ENCODE measurements at regions of chr10 and their contacts with region 1.

Region 1: GRCh38 chr10:31318854-31319601 is at the start of gene ZEB1:
- DNase-seq: peak; percentile 90
- H3K4me3 ChIP-seq: peak within 1 kb of the TSS; percentile 59 to 96 (median 82)
- H3K27ac ChIP-seq: peak within 1 kb of the TSS; percentile 92 to 97 (median 94)
- H3K4me1 ChIP-seq: peaks cover 0 to 34% (median 8%) of the 10 kb centered on the region in 4 donors
- H3K27me3 ChIP-seq: peaks cover 41% of the 10 kb centered on the region
- CTCF ChIP-seq: peak; percentile 40 to 56 (median 51)
- EP300 ChIP-seq: no peak
- POLR2A ChIP-seq: peak; percentile 30
- total RNA-seq, gene ZEB1: 22.4 to 61.1 (median 40.1) TPM

Region 2: GRCh38 chr10:31031558-31032257 is 287.3 kb before region 1 on chr10 and contains the start of gene ZNF438:
- in situ Hi-C with region 1: no loop called
- intact Hi-C with region 1: loop called (anchors 2 kb)
- DNase-seq: peak; percentile 97
- H3K4me3 ChIP-seq: peak within 1 kb of the TSS; percentile 48 to 73 (median 52)
- H3K27ac ChIP-seq: peak within 1 kb of the TSS; percentile 98 to 100 (median 99)
- H3K4me1 ChIP-seq: peaks cover 2 to 22% (median 8%) of the 10 kb centered on the region in 4 donors
- H3K27me3 ChIP-seq: no peaks in the 10 kb centered on the region
- CTCF ChIP-seq: peak; percentile 45 to 92 (median 62)
- EP300 ChIP-seq: peak; percentile 7
- POLR2A ChIP-seq: peak; percentile 80
- total RNA-seq, gene ZNF438: 4.4 to 7.4 (median 6.4) TPM

Region 3: GRCh38 chr10:31042670-31043069 is 276.4 kb before region 1 on chr10:
- in situ Hi-C with region 1: no loop called
- intact Hi-C with region 1: no loop called
- DNase-seq: no peak
- H3K4me3 ChIP-seq: no peak overlapping the region
- H3K27ac ChIP-seq: no peak overlapping the region
- H3K4me1 ChIP-seq: no peaks in the 10 kb centered on the region
- H3K27me3 ChIP-seq: no peaks in the 10 kb centered on the region
- CTCF ChIP-seq: no peak
- EP300 ChIP-seq: no peak
- POLR2A ChIP-seq: no peak

Region 4: GRCh38 chr10:31490858-31491504 is 172.0 kb after region 1 on chr10:
- in situ Hi-C with region 1: no loop called
- intact Hi-C with region 1: loop called (anchors 10 kb)
- DNase-seq: no peak
- H3K4me3 ChIP-seq: no peak overlapping the region
- H3K27ac ChIP-seq: no peak overlapping the region
- H3K4me1 ChIP-seq: no peaks in the 10 kb centered on the region
- H3K27me3 ChIP-seq: no peaks in the 10 kb centered on the region
- CTCF ChIP-seq: peak; percentile 41 to 52 (median 45)
- EP300 ChIP-seq: no peak
- POLR2A ChIP-seq: no peak

Region 5: DNA sequence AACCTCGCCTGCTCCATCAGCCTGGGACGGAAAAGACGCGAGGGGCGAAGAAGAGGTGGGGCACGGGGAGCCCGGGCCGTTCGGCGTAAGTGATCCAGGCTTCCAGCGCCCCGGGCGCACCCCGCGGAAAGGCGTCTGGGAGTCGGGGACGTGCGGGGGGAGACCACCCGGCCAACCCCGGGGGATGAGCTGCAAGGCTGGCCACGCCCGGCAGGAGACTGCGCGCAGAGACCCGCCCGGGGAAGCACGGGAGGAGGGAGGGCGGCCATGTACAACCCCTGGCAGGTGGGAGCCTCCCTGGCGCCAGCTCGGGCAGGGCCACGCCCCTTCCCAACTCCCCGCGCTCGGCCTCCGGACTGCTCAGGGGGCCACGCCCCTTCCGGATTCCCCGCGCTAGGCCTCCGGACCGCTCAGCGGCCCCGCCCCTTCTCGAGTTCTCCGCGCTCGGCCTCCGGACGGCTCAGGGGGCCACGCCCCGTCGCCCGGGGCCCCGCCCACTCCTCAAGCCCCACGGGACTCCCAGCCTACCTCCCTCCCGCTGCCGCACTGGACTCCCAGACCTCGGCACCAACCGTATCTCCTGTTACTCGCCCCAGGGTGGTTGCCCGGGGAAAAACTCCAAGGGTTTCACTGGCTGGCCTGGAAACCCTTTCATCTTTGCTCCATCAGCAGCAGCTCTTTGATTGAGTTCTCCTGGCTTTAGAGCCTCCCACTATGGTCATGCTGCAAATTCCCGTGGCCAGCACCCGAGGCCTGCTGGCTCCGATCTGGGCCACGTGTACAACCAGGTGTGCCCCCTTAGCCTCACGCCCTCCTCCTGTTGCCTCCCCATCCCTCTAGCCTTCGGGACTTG is 284.4 kb after region 1 on chr10:
- in situ Hi-C with region 1: no loop called
- intact Hi-C with region 1: loop called (anchors 10 kb)
- DNase-seq: peak; percentile 91
- H3K4me3 ChIP-seq: peak overlapping the region; percentile 39 to 64 (median 56)
- H3K27ac ChIP-seq: peak overlapping the region; percentile 83 to 92 (median 84)
- H3K4me1 ChIP-seq: peaks cover 3 to 22% (median 12%) of the 10 kb centered on the region in 4 donors
- H3K27me3 ChIP-seq: no peaks in the 10 kb centered on the region
- CTCF ChIP-seq: peak in 1 of 5 experiments; percentile 14
- EP300 ChIP-seq: no peak
- POLR2A ChIP-seq: peak; percentile 45

Measured in transverse colon (tissue), 4 donors.